CD4-positive, alpha-beta memory T cell (primary cell): ENCODE measurements at regions of chr6 and their contacts with region 1.

Region 1: DNA sequence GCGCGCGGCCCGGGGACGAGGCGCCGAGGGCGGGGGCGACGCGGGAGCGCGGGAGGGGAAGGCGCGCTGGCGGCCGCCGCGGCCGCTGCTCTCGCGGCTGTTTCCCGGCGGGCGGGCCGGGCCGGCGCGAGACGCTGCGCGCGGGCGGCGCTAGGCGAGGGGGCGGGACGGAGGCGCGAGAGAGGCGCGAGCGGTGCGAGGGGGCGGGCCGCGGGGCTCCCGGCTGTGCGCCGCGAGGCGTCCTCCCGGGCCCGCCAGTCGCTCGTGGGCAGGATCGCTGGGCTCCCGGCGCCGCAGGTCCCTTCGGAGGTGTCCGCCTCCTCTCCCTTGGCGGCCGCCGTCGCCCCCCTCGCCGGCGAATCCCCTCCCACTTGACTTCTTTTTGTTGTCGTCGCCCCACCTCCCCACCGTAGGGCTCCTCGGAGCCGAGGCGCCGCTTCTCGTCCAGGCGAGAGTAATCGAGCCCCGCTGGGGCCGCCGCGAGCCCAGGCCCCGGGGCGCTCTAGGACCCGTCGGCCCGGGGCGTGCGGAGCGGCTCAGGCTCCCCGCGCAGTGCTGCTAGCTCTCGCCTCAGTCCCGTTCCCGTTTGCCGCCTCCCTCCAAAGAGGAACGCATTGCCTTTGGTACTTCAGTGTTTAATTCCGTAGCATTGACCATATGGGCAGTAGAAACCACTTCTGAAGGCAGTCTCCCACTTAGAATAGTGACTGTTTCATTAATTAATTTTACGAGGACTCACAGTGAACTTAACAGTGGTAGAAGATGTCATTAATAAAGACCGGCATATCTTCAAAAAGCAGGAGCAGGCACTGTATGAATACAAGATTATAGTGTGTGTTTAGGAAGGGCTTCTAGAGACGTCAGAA is at the start of gene RANBP9:
- DNase-seq: peak; percentile 89 to 92 (median 91)
- H3K4me3 ChIP-seq: peak within 1 kb of the TSS; percentile 69 to 74
- H3K4me3 Mint-ChIP-seq: peak within 1 kb of the TSS; percentile 95 to 99 (median 96)
- H3K27ac ChIP-seq: peak within 1 kb of the TSS; percentile 87
- H3K27ac Mint-ChIP-seq: peak within 1 kb of the TSS; percentile 98 to 99 (median 99)
- H3K4me1 ChIP-seq: peaks cover 50% of the 10 kb centered on the region
- H3K4me1 Mint-ChIP-seq: peaks cover 28 to 73% (median 44%) of the 10 kb centered on the region in 4 donors
- H3K27me3 ChIP-seq: no peaks in the 10 kb centered on the region
- H3K27me3 Mint-ChIP-seq: no peaks in the 10 kb centered on the region
- total RNA-seq, gene RANBP9: 51.1 to 52.9 TPM

Region 2: GRCh38 chr6:13194852-13195251 is 517.1 kb before region 1 on chr6:
- CTCF ChIA-PET with region 1: no interaction called
- POLR2A ChIA-PET with region 1: no interaction called
- intact Hi-C with region 1: no loop called
- DNase-seq: no peak
- H3K4me3 ChIP-seq: no peak overlapping the region
- H3K4me3 Mint-ChIP-seq: no peak overlapping the region
- H3K27ac ChIP-seq: no peak overlapping the region
- H3K27ac Mint-ChIP-seq: no peak overlapping the region
- H3K4me1 ChIP-seq: no peaks in the 10 kb centered on the region
- H3K4me1 Mint-ChIP-seq: no peaks in the 10 kb centered on the region
- H3K27me3 ChIP-seq: no peaks in the 10 kb centered on the region
- H3K27me3 Mint-ChIP-seq: peaks cover 6 to 28% of the 10 kb centered on the region in 2 donors

Region 3: GRCh38 chr6:13574149-13574570 is 137.8 kb before region 1 on chr6:
- CTCF ChIA-PET with region 1: interaction called, 7 read pairs
- POLR2A ChIA-PET with region 1: interaction called, 38 read pairs
- intact Hi-C with region 1: no loop called
- DNase-seq: peak; percentile 94 to 97 (median 96)
- H3K4me3 ChIP-seq: peak overlapping the region; percentile 70 to 86
- H3K4me3 Mint-ChIP-seq: peak overlapping the region; percentile 92 to 98 (median 96)
- H3K27ac ChIP-seq: peak overlapping the region; percentile 89
- H3K27ac Mint-ChIP-seq: peak overlapping the region; percentile 96 to 99 (median 98)
- H3K4me1 ChIP-seq: peaks cover 16% of the 10 kb centered on the region
- H3K4me1 Mint-ChIP-seq: peaks cover 13 to 40% (median 24%) of the 10 kb centered on the region in 4 donors
- H3K27me3 ChIP-seq: no peaks in the 10 kb centered on the region
- H3K27me3 Mint-ChIP-seq: peaks cover 0 to 2% of the 10 kb centered on the region in 2 donors

Region 4: GRCh38 chr6:13687917-13688351 is 24.0 kb before region 1 on chr6:
- CTCF ChIA-PET with region 1: interaction called, 17 read pairs
- POLR2A ChIA-PET with region 1: interaction called, 79 read pairs
- intact Hi-C with region 1: loop called (anchors 1 kb)
- DNase-seq: peak; percentile 48 to 68 (median 55)
- H3K4me3 ChIP-seq: no peak overlapping the region
- H3K4me3 Mint-ChIP-seq: peak overlapping the region; percentile 57 to 89 (median 80)
- H3K27ac ChIP-seq: peak overlapping the region; percentile 52
- H3K27ac Mint-ChIP-seq: peak overlapping the region; percentile 91 to 96 (median 95)
- H3K4me1 ChIP-seq: peaks cover 84% of the 10 kb centered on the region
- H3K4me1 Mint-ChIP-seq: peaks cover 52 to 71% (median 61%) of the 10 kb centered on the region in 4 donors
- H3K27me3 ChIP-seq: no peaks in the 10 kb centered on the region
- H3K27me3 Mint-ChIP-seq: no peaks in the 10 kb centered on the region

Region 5: GRCh38 chr6:13725570-13725969 is 13.6 kb after region 1 on chr6:
- CTCF ChIA-PET with region 1: interaction called, 5 read pairs
- POLR2A ChIA-PET with region 1: interaction called, 49 read pairs
- intact Hi-C with region 1: loop called (anchors 1 kb)
- DNase-seq: peak; percentile 54 to 79 (median 75)
- H3K4me3 ChIP-seq: peak overlapping the region in 1 of 2 donors; percentile 0
- H3K4me3 Mint-ChIP-seq: peak overlapping the region; percentile 68 to 89 (median 82)
- H3K27ac ChIP-seq: peak overlapping the region; percentile 46
- H3K27ac Mint-ChIP-seq: peak overlapping the region; percentile 86 to 99 (median 96)
- H3K4me1 ChIP-seq: peaks cover 42% of the 10 kb centered on the region
- H3K4me1 Mint-ChIP-seq: peaks cover 25 to 41% (median 30%) of the 10 kb centered on the region in 4 donors
- H3K27me3 ChIP-seq: no peaks in the 10 kb centered on the region
- H3K27me3 Mint-ChIP-seq: no peaks in the 10 kb centered on the region

Region 6: DNA sequence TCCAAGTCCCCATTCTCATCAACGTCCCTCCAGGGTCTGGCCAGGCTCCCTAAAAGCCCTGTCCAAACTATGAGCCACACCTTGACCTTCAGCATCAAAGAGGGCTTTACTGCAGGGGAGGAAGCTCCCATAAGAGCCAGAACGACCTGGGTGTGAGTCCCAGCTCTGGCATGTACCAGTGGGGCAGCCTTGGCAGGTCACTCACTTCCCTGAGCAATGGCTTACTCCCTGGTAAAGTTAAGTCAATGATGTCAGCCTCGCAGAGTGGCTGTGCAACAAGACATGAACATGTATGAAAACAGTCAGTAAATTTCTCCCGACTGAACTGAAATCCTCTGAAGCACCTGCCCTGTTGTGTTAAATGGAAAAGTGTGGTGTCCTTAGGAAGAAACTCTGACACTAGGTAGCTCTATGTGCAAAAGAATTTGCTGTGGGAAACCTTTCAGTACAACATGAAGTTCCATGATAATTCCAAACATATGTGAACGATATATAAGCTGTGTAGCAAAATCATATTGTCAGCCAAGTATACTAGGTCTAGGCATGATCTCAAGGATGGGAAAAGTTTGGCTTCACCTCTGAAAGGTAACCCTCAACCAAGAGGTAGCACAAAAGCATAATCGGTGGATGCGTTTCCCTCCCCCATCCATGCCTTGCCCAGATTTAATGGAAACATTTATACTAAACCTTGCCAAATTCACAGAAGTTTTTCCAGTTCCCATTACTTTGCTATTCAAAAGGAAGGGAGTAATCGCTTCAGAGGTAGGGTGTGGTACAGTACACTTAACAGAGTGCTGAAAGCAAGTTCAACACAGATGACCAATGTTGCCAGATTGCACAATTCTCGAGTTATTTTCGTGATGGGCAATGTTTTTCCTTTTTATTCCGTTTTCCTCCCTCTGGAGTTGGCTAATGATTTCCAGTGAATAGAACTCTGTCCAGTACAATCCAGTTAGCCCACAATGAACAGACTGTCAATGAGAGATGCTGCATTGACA is 48.6 kb after region 1 on chr6:
- CTCF ChIA-PET with region 1: no interaction called
- POLR2A ChIA-PET with region 1: interaction called, 35 read pairs
- intact Hi-C with region 1: loop called (anchors 2 kb)
- DNase-seq: no peak
- H3K4me3 ChIP-seq: no peak overlapping the region
- H3K4me3 Mint-ChIP-seq: no peak overlapping the region
- H3K27ac ChIP-seq: no peak overlapping the region
- H3K27ac Mint-ChIP-seq: peak overlapping the region in 1 of 7 donors; percentile 4
- H3K4me1 ChIP-seq: peaks cover 18% of the 10 kb centered on the region
- H3K4me1 Mint-ChIP-seq: peaks cover 17 to 33% (median 23%) of the 10 kb centered on the region in 4 donors
- H3K27me3 ChIP-seq: no peaks in the 10 kb centered on the region
- H3K27me3 Mint-ChIP-seq: no peaks in the 10 kb centered on the region

Region 7: DNA sequence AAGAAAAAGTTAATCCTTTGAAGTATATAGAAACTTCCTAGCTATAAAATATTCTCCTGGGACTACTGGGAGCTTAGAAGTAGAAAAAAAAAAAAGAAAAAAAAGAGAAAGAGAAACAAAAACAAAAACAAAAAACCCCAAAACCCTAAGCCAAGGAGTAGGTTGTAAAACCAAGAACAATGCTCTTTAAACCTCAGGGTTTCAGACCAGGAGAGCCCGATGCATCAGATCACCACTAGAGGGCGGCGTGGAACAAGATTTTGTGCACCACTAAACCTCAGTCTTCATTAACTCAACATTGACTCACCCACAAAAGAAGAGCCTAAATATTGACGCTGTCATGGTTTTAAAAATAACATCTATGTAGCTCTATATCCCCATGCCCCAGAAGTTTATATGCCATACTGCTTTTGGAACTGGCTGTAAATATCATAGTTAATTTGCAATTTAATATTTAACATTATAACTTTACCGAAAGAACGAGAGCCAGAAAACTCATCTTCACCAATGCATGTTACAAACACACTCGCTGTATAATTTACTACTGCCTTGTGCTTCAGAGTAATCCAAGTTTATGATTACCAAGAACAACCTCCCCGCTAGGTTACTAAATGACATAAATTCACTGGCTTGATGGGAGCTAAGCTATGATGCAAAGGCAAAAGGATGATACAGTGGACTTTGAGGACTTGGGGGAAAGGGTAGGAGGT is 83.2 kb after region 1 on chr6:
- CTCF ChIA-PET with region 1: interaction called, 3 read pairs
- POLR2A ChIA-PET with region 1: no interaction called
- intact Hi-C with region 1: loop called (anchors 1 kb)
- DNase-seq: peak; percentile 73 to 77 (median 75)
- H3K4me3 ChIP-seq: no peak overlapping the region
- H3K4me3 Mint-ChIP-seq: no peak overlapping the region
- H3K27ac ChIP-seq: no peak overlapping the region
- H3K27ac Mint-ChIP-seq: peak overlapping the region in 3 of 7 donors; percentile 7 to 32 (median 7)
- H3K4me1 ChIP-seq: no peaks in the 10 kb centered on the region
- H3K4me1 Mint-ChIP-seq: peaks cover 0 to 3% (median under 1%) of the 10 kb centered on the region in 4 donors
- H3K27me3 ChIP-seq: no peaks in the 10 kb centered on the region
- H3K27me3 Mint-ChIP-seq: no peaks in the 10 kb centered on the region

Region 8: GRCh38 chr6:14117158-14118090 is 405.5 kb after region 1 on chr6 and contains the start of gene CD83:
- CTCF ChIA-PET with region 1: no interaction called
- POLR2A ChIA-PET with region 1: no interaction called
- intact Hi-C with region 1: loop called (anchors 5 kb)
- DNase-seq: peak; percentile 85 to 91 (median 87)
- H3K4me3 ChIP-seq: peak within 1 kb of the TSS; percentile 80 to 93
- H3K4me3 Mint-ChIP-seq: peak within 1 kb of the TSS; percentile 88 to 98 (median 95)
- H3K27ac ChIP-seq: peak within 1 kb of the TSS; percentile 91
- H3K27ac Mint-ChIP-seq: peak within 1 kb of the TSS; percentile 92 to 97 (median 96)
- H3K4me1 ChIP-seq: peaks cover 41% of the 10 kb centered on the region
- H3K4me1 Mint-ChIP-seq: peaks cover 29 to 53% (median 31%) of the 10 kb centered on the region in 4 donors
- H3K27me3 ChIP-seq: no peaks in the 10 kb centered on the region
- H3K27me3 Mint-ChIP-seq: no peaks in the 10 kb centered on the region
- total RNA-seq, gene CD83: 5.8 to 7.0 TPM